Colonic mucosa (tissue), 4 donors: ENCODE measurements at regions of chr1 and their contacts with region 1.

Region 1: DNA sequence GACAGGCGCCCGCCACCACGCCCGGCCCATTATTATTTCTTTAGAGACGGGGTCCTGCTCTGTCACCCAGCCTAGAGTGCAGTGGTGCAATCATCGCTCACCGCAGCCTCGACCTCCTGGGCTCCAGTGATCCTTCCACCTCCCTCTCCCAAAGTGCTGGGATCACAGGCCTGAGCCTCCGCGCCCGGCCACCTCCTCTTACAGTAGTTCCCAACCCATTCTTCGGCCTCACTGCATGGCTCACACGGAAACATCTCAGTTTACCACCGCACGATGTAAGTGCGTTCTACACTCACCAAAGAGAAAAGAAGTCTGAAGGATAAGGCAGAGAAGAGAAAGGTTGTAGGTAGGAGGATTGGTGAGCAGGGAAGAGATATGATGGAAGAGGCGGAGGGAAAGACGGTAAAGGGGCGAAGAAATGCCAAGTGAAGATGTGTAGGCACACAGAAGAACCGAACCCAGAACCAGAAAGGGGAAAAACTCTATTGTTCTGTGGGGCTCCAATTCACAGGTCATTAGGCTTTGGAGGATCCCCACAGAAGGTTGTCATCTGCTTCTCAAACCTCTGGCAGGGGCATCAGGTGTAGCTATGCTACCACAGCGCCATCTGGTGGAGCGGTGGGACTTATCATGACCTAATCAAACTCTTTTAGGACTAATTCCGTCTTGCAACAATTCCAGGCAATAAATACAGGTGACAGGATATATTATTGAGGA is 504.2 kb downstream of the SMYD3 start:
- DNase-seq: peak; percentile 89
- H3K4me3 ChIP-seq: no peak overlapping the region
- H3K27ac ChIP-seq: no peak overlapping the region
- H3K4me1 ChIP-seq: no peaks in the 10 kb centered on the region
- H3K27me3 ChIP-seq: no peaks in the 10 kb centered on the region
- CTCF ChIP-seq: peak; percentile 74

Region 2: DNA sequence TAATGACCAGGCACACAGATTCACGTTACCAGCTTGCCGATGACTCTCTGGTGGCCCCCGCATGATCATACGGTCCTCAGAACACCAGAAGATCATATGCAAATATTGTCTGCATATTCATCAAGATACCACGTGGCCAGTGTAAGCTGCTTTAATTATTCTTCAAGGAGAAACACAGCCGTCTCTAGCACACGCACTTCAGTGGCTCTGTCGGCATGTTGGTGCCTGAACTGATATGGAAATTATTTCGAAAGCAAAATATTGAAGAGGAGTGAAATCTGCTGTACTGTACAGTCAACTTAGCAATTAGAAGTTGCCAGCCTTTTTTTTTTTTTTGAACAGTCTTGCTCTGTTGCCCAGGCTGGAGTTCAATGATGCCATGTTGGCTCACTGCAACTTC is 854.0 kb before region 1 on chr1:
- intact Hi-C with region 1: loop called (anchors 5 kb)
- DNase-seq: no peak
- H3K4me3 ChIP-seq: no peak overlapping the region
- H3K27ac ChIP-seq: no peak overlapping the region
- H3K4me1 ChIP-seq: peaks cover 4% of the 10 kb centered on the region
- H3K27me3 ChIP-seq: peaks cover 12% of the 10 kb centered on the region
- CTCF ChIP-seq: no peak

Region 3: DNA sequence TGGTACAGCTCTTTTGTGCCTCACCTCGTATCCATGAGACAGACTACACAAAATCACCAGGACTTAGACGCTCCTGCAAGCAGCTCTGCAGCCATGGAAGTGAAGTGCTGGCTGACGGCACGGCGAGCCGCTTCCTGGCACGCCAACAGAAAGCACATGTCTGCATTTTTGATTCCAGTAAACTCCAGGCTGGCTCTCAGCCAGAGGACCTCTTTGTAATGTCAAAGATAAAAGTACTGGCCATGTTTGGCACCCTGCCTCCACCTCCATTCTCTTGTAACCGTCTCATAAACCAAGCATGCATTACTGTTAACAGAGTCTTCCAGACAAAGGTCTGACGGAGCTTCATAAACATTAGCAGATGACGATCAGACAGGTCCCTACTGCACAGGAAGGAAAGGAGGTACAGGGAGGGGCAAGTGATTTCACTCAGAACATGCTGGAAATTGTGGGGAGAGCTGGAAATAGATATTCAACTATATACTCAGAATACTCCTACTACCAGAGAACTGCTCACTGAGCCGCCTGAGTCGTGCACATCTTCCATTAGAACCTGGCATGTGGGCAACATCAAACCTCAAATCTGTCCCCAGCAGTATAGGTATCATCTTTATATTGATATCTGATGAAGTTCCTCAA is 127.8 kb before region 1 on chr1:
- intact Hi-C with region 1: loop called (anchors 10 kb)
- DNase-seq: peak; percentile 47
- H3K4me3 ChIP-seq: no peak overlapping the region
- H3K27ac ChIP-seq: no peak overlapping the region
- H3K4me1 ChIP-seq: no peaks in the 10 kb centered on the region
- H3K27me3 ChIP-seq: no peaks in the 10 kb centered on the region
- CTCF ChIP-seq: no peak

Region 4: GRCh38 chr1:245894843-245895242 is 108.0 kb before region 1 on chr1:
- intact Hi-C with region 1: loop called (anchors 5 kb)
- DNase-seq: peak; percentile 31
- H3K4me3 ChIP-seq: no peak overlapping the region
- H3K27ac ChIP-seq: no peak overlapping the region
- H3K4me1 ChIP-seq: no peaks in the 10 kb centered on the region
- H3K27me3 ChIP-seq: no peaks in the 10 kb centered on the region
- CTCF ChIP-seq: no peak